ENCODE measurements at regions of chr11 and their contacts with region 1.

Region 1: GRCh38 chr11:121643535-121644512 is 191.1 kb upstream of the SORL1-AS1 start:
- DNase-seq: no peak

Region 2: DNA sequence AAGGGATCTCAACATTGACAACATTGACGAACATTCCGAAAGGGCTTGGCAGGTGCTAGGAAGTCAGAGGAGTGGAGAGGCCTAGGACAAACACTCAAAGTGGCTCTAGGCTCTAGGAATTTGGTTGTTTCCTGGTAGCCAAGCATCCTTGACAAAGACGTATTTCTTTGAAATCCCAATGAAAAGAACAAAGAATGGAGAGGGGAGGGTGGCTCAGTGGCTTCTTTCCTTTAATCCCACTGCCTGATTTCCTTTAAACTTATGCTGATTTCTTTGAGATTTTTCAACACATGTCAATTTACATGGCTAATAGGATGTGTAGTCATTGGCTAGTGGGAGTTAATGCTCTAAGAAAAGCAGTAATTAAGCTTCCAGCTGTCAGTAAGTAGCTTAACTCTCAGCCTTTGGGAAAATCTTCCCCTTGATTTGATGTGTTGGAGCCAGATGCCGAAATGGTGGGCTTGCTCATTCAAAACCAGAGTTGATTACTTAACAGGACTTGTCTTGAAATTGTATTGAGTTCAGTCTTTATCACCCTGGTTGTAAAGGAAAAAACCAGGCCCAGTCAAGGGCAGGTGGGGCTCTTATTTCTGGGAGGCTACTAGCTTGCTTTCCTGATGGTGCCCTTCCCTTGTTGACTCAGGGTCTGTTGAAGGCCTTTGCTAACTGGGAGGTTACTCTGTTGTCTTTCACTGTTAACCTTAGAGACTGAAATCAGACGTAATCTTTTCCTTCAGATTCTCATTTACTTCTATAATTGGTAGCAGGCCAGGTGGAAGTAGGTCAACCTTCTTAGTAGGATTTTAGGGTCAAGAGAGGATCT is 146.4 kb before region 1 on chr11:
- intact Hi-C with region 1: no loop called
- DNase-seq: no peak

Region 3: GRCh38 chr11:122375687-122376398 is 732.0 kb after region 1 on chr11:
- intact Hi-C with region 1: loop called (anchors 10 kb)
- DNase-seq: no peak